ENCODE measurements at regions of chr9 and their contacts with region 1.

Region 1: GRCh38 chr9:71806901-71807307 is 38.6 kb upstream of the CEMIP2 start:
- DNase-seq: peak; percentile 82
- ATAC-seq: peak; percentile 99
- H3K4me3 Mint-ChIP-seq: no peak overlapping the region
- H3K27ac Mint-ChIP-seq: peak overlapping the region; percentile 47
- H3K4me1 Mint-ChIP-seq: peaks cover 4% of the 10 kb centered on the region
- H3K27me3 Mint-ChIP-seq: no peaks in the 10 kb centered on the region

Region 2: GRCh38 chr9:71725590-71726338 is 81.1 kb before region 1 on chr9:
- CTCF ChIA-PET with region 1: no interaction called
- DNase-seq: no peak
- ATAC-seq: no peak
- H3K4me3 Mint-ChIP-seq: no peak overlapping the region
- H3K27ac Mint-ChIP-seq: no peak overlapping the region
- H3K4me1 Mint-ChIP-seq: no peaks in the 10 kb centered on the region
- H3K27me3 Mint-ChIP-seq: no peaks in the 10 kb centered on the region

Region 3: DNA sequence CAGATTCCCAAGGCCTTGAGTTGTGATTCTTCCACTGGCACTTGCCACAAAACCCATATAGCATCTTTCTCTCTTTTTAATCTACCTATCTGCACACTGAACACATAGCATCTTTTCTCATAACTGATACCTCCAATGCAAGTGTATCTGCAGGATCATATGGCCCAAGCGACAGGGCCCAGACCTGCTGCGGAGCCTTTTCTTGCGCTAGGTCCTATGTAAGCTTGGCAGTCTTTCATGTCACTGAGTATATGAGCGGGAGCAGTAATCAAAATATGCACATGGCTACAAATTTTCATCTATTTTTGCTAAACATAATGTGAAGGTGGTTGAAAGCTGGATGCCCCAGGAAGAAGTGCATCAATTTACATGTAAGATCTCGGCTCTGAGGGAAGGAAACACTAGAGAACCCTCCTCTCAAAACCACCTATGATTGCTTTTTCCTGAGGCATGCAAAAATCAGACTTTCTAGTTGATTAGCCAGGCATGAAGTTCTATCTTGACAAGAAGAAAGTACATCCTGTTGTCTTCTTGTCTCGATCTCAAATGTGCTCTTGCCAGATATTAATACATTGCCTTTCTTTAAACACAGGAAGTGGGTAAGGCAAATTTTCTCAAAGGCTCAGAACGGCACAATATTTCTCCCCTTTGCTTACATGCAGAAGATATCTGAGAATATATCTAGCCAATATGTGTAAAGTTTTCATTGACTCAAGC is 11.6 kb before region 1 on chr9:
- CTCF ChIA-PET with region 1: interaction called, 21 read pairs
- DNase-seq: no peak
- ATAC-seq: peak; percentile 86
- H3K4me3 Mint-ChIP-seq: peak overlapping the region; percentile 21
- H3K27ac Mint-ChIP-seq: peak overlapping the region; percentile 93
- H3K4me1 Mint-ChIP-seq: peaks cover 39% of the 10 kb centered on the region
- H3K27me3 Mint-ChIP-seq: no peaks in the 10 kb centered on the region

Region 4: GRCh38 chr9:71911253-71912074 is 104.6 kb after region 1 on chr9 and contains the start of gene C9orf85:
- CTCF ChIA-PET with region 1: interaction called, 10 read pairs
- DNase-seq: peak; percentile 99
- ATAC-seq: peak; percentile 95
- H3K4me3 Mint-ChIP-seq: peak within 1 kb of the TSS; percentile 95
- H3K27ac Mint-ChIP-seq: peak within 1 kb of the TSS; percentile 99
- H3K4me1 Mint-ChIP-seq: peaks cover 64% of the 10 kb centered on the region
- H3K27me3 Mint-ChIP-seq: no peaks in the 10 kb centered on the region
- total RNA-seq, gene C9orf85: 9.8 to 13.0 TPM

Region 5: GRCh38 chr9:72022841-72023240 is 215.9 kb after region 1 on chr9:
- CTCF ChIA-PET with region 1: interaction called, 125 read pairs
- DNase-seq: no peak
- ATAC-seq: no peak
- H3K4me3 Mint-ChIP-seq: no peak overlapping the region
- H3K27ac Mint-ChIP-seq: no peak overlapping the region
- H3K4me1 Mint-ChIP-seq: peaks cover 13% of the 10 kb centered on the region
- H3K27me3 Mint-ChIP-seq: no peaks in the 10 kb centered on the region

Measured in activated CD8-positive, alpha-beta memory T cell treated with anti-CD3 and anti-CD28 coated beads, Interleukin-2, amount 10 ng/mL, durations not matched to agents 7 days and 5 days (primary cell).